ENCODE measurements at regions of chr5 and their contacts with region 1.

Region 1: GRCh38 chr5:96823900-96824351 is 16.2 kb upstream of the ERAP1 start:
- DNase-seq: peak in 1 of 5 donors; percentile 35
- H3K4me3 ChIP-seq: no peak overlapping the region
- H3K4me3 Mint-ChIP-seq: peak overlapping the region in 1 of 8 donors; percentile 4
- H3K27ac ChIP-seq: no peak overlapping the region
- H3K27ac Mint-ChIP-seq: peak overlapping the region in 3 of 7 donors; percentile 14 to 83 (median 49)
- H3K4me1 ChIP-seq: peaks cover 28% of the 10 kb centered on the region
- H3K4me1 Mint-ChIP-seq: peaks cover 31 to 46% (median 38%) of the 10 kb centered on the region in 4 donors
- H3K27me3 ChIP-seq: no peaks in the 10 kb centered on the region
- H3K27me3 Mint-ChIP-seq: peaks cover 0 to 2% of the 10 kb centered on the region in 2 donors

Region 2: DNA sequence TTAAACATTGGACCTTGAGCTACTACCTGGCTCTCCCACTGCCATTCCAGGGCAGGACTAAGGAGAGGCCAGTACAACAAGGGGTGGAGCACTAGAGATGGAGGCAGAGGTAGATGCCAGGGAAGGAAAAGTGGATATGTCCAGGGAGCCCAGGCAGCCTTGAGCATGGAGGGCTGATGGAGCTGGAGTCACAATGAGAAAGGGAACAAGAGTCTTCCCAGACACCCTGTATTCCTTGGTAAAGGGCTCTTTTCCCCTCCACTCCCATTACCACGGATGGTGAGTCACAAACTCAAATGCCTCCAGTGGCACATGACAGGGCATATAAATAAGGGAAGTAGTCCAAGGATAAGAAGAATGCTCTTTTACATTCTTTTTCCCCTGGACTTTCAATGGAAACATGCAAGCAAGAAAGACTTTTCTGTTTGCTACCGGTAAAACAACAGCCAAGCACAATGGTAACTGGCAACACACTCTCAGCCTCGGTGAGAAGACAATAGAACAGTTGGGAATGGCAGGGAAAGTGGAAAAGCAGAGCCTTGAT is 32.9 kb before region 1 on chr5:
- CTCF ChIA-PET with region 1: interaction called, 5 read pairs
- POLR2A ChIA-PET with region 1: interaction called, 3 read pairs
- intact Hi-C with region 1: loop called (anchors 5 kb)
- DNase-seq: no peak
- H3K4me3 ChIP-seq: no peak overlapping the region
- H3K4me3 Mint-ChIP-seq: peak overlapping the region in 1 of 8 donors; percentile 16
- H3K27ac ChIP-seq: no peak overlapping the region
- H3K27ac Mint-ChIP-seq: peak overlapping the region; percentile 36 to 91 (median 57)
- H3K4me1 ChIP-seq: peaks cover 21% of the 10 kb centered on the region
- H3K4me1 Mint-ChIP-seq: peaks cover 27 to 39% (median 36%) of the 10 kb centered on the region in 4 donors
- H3K27me3 ChIP-seq: no peaks in the 10 kb centered on the region
- H3K27me3 Mint-ChIP-seq: no peaks in the 10 kb centered on the region

Region 3: GRCh38 chr5:96844476-96844990 is 20.6 kb after region 1 on chr5:
- CTCF ChIA-PET with region 1: no interaction called
- POLR2A ChIA-PET with region 1: no interaction called
- intact Hi-C with region 1: no loop called
- DNase-seq: no peak
- H3K4me3 ChIP-seq: no peak overlapping the region
- H3K4me3 Mint-ChIP-seq: no peak overlapping the region
- H3K27ac ChIP-seq: no peak overlapping the region
- H3K27ac Mint-ChIP-seq: no peak overlapping the region
- H3K4me1 ChIP-seq: no peaks in the 10 kb centered on the region
- H3K4me1 Mint-ChIP-seq: peaks cover 0 to 10% (median 5%) of the 10 kb centered on the region in 4 donors
- H3K27me3 ChIP-seq: no peaks in the 10 kb centered on the region
- H3K27me3 Mint-ChIP-seq: peaks cover 3 to 4% of the 10 kb centered on the region in 2 donors

Measured in CD4-positive, alpha-beta memory T cell (primary cell).